ENCODE measurements at regions of chr16 and their contacts with region 1.

Region 1: DNA sequence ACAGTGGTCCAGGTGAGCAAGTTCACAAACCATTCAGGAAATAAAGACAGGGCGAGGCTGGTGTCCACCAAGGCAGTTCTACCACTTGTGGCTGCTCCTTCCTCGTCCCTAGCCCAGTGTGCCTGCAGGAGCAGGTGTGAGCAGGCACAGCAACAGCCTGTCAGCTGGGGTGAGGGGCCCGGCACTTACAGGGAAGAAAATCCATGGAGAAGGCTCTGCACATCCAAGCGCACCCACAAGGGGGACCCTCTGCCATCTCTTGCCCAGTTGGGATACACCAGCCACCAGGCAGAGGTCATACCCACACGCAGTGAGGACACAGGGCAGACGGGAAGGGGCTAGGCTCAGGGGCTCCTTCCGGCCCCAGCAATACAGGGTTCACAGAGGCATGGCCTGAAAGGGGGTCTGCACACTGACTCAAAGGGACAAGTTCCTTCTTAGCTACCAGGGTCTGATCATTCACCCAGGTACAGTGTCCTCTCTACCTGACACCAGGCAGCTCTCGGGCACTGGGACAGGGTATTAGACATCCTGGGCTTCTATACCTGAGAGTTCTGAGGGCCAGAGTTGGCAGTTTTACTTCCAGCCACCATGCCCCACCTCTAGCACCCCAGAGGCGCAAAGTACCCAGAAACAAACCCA is 27.0 kb downstream of the CDIP1 start:
- DNase-seq: no peak
- ATAC-seq: peak; percentile 81
- H3K4me3 ChIP-seq: no peak overlapping the region
- H3K27ac ChIP-seq: no peak overlapping the region
- H3K4me1 ChIP-seq: no peaks in the 10 kb centered on the region
- H3K27me3 ChIP-seq: no peaks in the 10 kb centered on the region
- CTCF ChIP-seq: peak; percentile 81

Region 2: GRCh38 chr16:4472880-4473279 is 38.7 kb before region 1 on chr16:
- CTCF ChIA-PET with region 1: no interaction called
- POLR2A ChIA-PET with region 1: interaction called, 16 read pairs
- in situ Hi-C with region 1: no loop called
- intact Hi-C with region 1: no loop called
- DNase-seq: no peak
- ATAC-seq: no peak
- H3K4me3 ChIP-seq: no peak overlapping the region; a peak in 1 of 4 replicates
- H3K27ac ChIP-seq: no peak overlapping the region
- H3K4me1 ChIP-seq: peaks cover 14% of the 10 kb centered on the region
- H3K27me3 ChIP-seq: no peaks in the 10 kb centered on the region
- CTCF ChIP-seq: no peak

Region 3: DNA sequence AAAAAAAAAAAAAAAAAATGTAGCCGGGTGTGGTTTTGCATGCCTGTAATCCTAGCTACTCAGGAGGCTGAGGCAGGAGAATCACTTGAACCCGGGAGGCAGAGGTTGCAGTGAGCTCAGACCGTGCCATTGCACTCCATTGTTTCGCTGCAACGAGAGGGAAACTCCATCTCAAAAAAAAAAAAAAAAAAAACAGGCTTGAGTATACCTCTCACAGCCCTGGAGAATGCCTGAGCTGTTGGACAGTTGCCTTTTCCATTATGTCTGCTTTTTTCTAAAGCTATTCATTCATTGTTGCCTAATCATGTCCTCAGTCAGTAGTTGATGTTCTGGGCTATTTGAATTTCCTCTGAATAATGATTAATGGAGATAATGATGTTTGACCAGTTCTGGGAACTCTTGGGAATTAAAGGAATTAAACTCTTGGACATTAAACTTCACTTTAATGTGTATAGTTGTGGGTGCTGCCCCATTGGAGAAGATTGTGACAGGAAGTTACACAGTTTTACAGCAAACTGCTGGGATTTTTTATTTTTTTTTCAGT is 23.5 kb before region 1 on chr16:
- CTCF ChIA-PET with region 1: interaction called, 10 read pairs
- POLR2A ChIA-PET with region 1: no interaction called
- in situ Hi-C with region 1: no loop called
- intact Hi-C with region 1: no loop called
- DNase-seq: no peak
- ATAC-seq: no peak
- H3K4me3 ChIP-seq: no peak overlapping the region
- H3K27ac ChIP-seq: no peak overlapping the region
- H3K4me1 ChIP-seq: no peaks in the 10 kb centered on the region
- H3K27me3 ChIP-seq: no peaks in the 10 kb centered on the region
- CTCF ChIP-seq: no peak

Region 4: GRCh38 chr16:4548124-4548523 is 36.6 kb after region 1 on chr16:
- CTCF ChIA-PET with region 1: interaction called, 3 read pairs
- POLR2A ChIA-PET with region 1: no interaction called
- in situ Hi-C with region 1: no loop called
- intact Hi-C with region 1: loop called (anchors 5 kb)
- DNase-seq: no peak
- ATAC-seq: no peak
- H3K4me3 ChIP-seq: no peak overlapping the region
- H3K27ac ChIP-seq: no peak overlapping the region
- H3K4me1 ChIP-seq: no peaks in the 10 kb centered on the region
- H3K27me3 ChIP-seq: no peaks in the 10 kb centered on the region
- CTCF ChIP-seq: no peak

Region 5: GRCh38 chr16:4572715-4573114 is 61.2 kb after region 1 on chr16:
- CTCF ChIA-PET with region 1: no interaction called
- POLR2A ChIA-PET with region 1: no interaction called
- in situ Hi-C with region 1: no loop called
- intact Hi-C with region 1: no loop called
- DNase-seq: no peak
- ATAC-seq: no peak
- H3K4me3 ChIP-seq: no peak overlapping the region
- H3K27ac ChIP-seq: no peak overlapping the region
- H3K4me1 ChIP-seq: no peaks in the 10 kb centered on the region
- H3K27me3 ChIP-seq: no peaks in the 10 kb centered on the region
- CTCF ChIP-seq: no peak

Region 6: GRCh38 chr16:4660454-4661007 is 149.0 kb after region 1 on chr16:
- CTCF ChIA-PET with region 1: no interaction called
- POLR2A ChIA-PET with region 1: no interaction called
- in situ Hi-C with region 1: no loop called
- intact Hi-C with region 1: no loop called
- DNase-seq: no peak
- ATAC-seq: no peak
- H3K4me3 ChIP-seq: no peak overlapping the region
- H3K27ac ChIP-seq: no peak overlapping the region
- H3K4me1 ChIP-seq: no peaks in the 10 kb centered on the region
- H3K27me3 ChIP-seq: no peaks in the 10 kb centered on the region
- CTCF ChIP-seq: no peak